WTC11 (cell line): ENCODE measurements at regions of chr3 and their contacts with region 1.

Region 1: DNA sequence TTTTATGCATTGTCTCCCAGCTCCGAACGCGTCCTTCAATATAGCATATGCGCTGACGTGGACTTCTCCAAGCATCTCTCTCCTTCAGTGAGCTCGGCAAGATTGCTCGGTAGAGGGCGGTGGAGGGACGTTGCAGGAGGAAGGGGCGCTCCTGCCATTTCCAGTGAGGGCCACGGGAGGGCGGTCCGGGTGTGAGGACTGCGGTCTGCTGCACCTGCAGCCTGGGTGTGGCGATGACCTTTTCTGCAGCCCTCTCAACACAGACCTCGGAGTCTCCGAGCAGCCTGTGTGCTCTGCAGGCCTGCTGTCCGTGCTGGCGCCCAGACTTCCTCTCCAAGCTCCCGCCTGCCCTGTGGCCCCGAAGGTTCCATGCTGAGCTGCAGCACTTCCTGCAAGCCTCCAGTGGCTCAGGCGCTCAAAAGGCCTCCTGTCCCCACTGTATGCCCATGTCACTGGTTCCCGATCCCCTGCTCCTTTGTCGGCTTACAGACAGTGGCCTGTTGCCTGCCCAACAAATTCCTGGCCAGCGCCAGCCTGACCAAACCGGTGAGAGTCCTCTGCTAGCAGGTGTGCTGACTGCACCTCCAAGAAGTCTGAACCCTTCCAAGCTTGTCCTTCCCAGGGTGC is 8.9 kb upstream of the RTP3 start:
- DNase-seq: peak; percentile 99
- ATAC-seq: peak; percentile 98
- H3K4me3 Mint-ChIP-seq: no peak overlapping the region
- H3K27ac Mint-ChIP-seq: peak overlapping the region; percentile 55; the same call in 1 of the 2 replicates
- H3K4me1 Mint-ChIP-seq: peaks cover 28% of the 10 kb centered on the region
- H3K27me3 Mint-ChIP-seq: peaks cover 12% of the 10 kb centered on the region
- CTCF ChIP-seq: peak; percentile 92

Region 2: GRCh38 chr3:46359733-46360493 is 128.9 kb before region 1 on chr3:
- CTCF ChIA-PET with region 1: no interaction called
- POLR2A ChIA-PET with region 1: no interaction called
- DNase-seq: no peak
- ATAC-seq: no peak
- H3K4me3 Mint-ChIP-seq: no peak overlapping the region
- H3K27ac Mint-ChIP-seq: no peak overlapping the region
- H3K4me1 Mint-ChIP-seq: no peaks in the 10 kb centered on the region
- H3K27me3 Mint-ChIP-seq: peaks cover 5% of the 10 kb centered on the region
- CTCF ChIP-seq: no peak

Region 3: DNA sequence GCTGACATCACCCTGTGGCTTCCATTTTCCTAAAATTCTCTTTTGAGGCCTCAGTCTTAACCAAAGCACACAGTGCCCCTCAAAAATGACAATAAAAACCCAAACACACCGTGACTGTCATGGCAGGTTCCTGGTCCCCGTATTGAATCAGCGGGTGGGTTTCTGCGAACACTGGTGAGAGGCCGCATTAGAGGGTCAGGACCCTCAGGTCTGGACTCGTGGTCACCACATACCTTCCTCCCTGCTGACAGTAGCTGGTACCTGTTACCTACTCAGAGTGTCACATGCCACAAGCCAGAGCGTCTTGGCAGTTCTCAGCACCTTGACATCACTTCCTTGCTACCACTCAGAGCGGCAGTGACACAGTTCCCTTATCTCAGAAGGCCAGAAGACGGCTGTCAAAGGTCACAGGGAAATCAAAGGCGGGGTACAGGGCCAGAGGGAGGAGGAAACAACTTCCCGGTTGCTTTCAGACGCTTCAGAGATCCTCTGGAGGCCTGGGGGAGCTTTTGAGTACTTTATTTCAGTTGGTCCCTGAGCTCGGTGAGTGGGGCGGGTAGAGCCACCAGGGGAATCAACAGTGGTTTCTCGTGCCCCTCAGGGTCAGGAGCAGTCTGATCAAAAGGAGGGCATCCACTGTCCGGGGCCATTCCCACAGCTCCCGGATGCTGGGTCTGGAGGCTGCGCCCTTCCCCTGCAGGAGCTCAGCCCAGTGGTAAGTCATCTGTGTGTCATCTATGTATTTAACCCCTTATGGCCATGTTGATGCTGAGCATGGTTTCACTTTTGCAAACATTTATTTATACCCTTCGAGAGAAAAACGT is 81.8 kb before region 1 on chr3 and contains the starts of genes CCR5AS and CCRL2:
- CTCF ChIA-PET with region 1: no interaction called
- POLR2A ChIA-PET with region 1: no interaction called
- DNase-seq: no peak
- ATAC-seq: no peak
- H3K4me3 Mint-ChIP-seq: no peak within 1 kb of the TSS
- H3K27ac Mint-ChIP-seq: no peak within 1 kb of the TSS
- H3K4me1 Mint-ChIP-seq: peaks cover 2% of the 10 kb centered on the region; the same call in 1 of the 2 replicates
- H3K27me3 Mint-ChIP-seq: no peaks in the 10 kb centered on the region
- CTCF ChIP-seq: no peak
- total RNA-seq, gene CCRL2: not detected in 3 replicates

Region 4: GRCh38 chr3:46462111-46462510 is 26.7 kb before region 1 on chr3:
- CTCF ChIA-PET with region 1: interaction called, 22 read pairs
- POLR2A ChIA-PET with region 1: no interaction called
- DNase-seq: no peak
- ATAC-seq: peak; percentile 63
- H3K4me3 Mint-ChIP-seq: no peak overlapping the region
- H3K27ac Mint-ChIP-seq: no peak overlapping the region
- H3K4me1 Mint-ChIP-seq: peaks cover 3% of the 10 kb centered on the region
- H3K27me3 Mint-ChIP-seq: peaks cover 42% of the 10 kb centered on the region
- CTCF ChIP-seq: no peak

Region 5: DNA sequence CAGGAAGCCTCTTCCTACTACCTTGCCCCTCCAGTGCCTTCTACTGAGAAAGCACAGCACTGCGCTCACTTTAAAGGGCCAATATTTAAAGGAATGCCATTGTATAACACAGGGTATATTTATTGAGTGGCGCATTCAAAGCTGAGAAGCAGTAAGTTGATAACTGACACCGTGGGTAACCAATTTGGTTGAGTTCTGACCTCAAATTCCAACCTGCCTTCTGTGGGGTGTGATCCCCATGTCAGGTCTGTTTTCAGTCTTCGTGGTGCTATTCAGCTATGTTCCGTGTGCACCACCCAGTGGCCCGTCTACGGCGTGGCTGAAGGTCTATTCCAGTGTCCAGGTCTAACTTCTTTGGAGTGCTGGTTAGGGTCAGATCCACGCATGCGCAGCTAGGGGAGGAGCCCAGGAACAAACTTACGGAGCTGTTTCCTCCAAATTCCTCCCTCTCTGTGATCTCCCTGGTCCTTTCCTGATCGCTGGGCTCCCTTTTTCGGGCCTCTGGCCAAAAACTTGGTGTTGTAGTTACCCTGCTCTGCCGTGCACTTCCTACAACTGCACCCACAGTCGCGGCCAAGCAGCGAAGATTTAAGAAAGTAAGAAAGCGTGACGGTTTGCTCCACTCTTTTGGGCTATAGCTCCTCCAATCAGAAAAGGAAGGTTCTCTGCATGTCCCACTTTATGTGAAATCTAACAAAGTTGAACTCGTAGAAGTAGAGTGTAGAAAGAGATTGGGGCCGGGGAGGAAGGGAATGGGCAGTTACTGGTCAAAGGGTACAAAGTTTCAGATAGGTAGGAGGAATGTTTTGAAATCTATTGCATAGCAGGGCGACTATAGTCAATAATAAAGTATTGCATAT is 69.6 kb after region 1 on chr3:
- CTCF ChIA-PET with region 1: interaction called, 99 read pairs
- POLR2A ChIA-PET with region 1: interaction called, 6 read pairs
- DNase-seq: peak; percentile 76
- ATAC-seq: peak; percentile 88
- H3K4me3 Mint-ChIP-seq: peak overlapping the region; percentile 57
- H3K27ac Mint-ChIP-seq: peak overlapping the region; percentile 92
- H3K4me1 Mint-ChIP-seq: peaks cover 60% of the 10 kb centered on the region
- H3K27me3 Mint-ChIP-seq: no peaks in the 10 kb centered on the region; the same call in 1 of the 2 replicates
- CTCF ChIP-seq: no peak

Region 6: DNA sequence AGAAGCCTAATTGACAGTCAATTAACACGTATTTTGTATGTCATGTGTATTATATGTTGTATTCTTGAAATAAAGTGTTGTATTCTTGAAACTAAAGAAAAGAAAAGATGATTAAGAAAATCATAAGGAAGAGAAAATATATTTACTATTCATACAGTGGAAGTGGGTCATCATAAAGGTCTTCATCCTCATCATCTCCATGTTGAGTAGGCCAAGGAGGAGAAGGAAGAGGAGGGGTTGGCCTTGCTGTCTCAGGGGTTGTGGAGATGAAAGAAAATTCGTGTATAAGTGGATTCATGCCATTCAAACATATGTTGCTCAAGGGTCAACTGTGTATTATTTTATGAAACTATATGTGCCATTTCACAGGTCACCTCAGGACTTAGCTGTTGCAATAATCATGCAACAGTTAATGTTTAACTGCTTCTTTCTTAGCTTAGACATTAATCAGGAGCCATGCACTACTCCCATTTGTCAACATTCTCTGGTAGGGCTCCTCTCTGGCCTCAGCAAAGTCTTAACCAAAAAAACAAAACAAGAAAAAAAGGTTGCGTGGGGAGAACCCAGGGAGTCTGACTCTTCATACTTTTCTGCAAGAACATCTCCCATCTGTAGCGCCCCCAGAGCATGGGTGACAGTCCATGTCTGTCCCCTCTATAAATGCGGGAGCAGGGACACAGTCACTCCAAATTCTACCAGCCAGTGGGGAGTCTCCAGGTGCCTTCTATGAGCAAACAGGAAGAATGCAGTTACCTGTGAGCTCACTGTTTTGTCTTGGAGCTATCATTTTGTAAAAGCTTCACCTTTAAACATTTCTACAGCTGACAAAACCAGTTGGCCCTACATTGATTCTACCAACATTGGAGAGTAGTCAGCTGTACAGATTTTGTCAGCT is 97.2 kb after region 1 on chr3:
- CTCF ChIA-PET with region 1: interaction called, 54 read pairs
- POLR2A ChIA-PET with region 1: interaction called, 8 read pairs
- DNase-seq: no peak
- ATAC-seq: peak; percentile 54
- H3K4me3 Mint-ChIP-seq: no peak overlapping the region
- H3K27ac Mint-ChIP-seq: peak overlapping the region; percentile 42
- H3K4me1 Mint-ChIP-seq: peaks cover 41% of the 10 kb centered on the region
- H3K27me3 Mint-ChIP-seq: peaks cover 44% of the 10 kb centered on the region
- CTCF ChIP-seq: no peak

Region 7: GRCh38 chr3:46629551-46630517 is 141.0 kb after region 1 on chr3:
- CTCF ChIA-PET with region 1: interaction called, 70 read pairs
- POLR2A ChIA-PET with region 1: interaction called, 4 read pairs
- DNase-seq: peak; percentile 91
- ATAC-seq: peak; percentile 89
- H3K4me3 Mint-ChIP-seq: peak overlapping the region; percentile 27
- H3K27ac Mint-ChIP-seq: peak overlapping the region; percentile 72
- H3K4me1 Mint-ChIP-seq: peaks cover 51% of the 10 kb centered on the region
- H3K27me3 Mint-ChIP-seq: no peaks in the 10 kb centered on the region; the same call in 1 of the 2 replicates
- CTCF ChIP-seq: peak; percentile 44; the same call in 1 of the 2 replicates

Region 8: GRCh38 chr3:46705022-46705530 is 216.2 kb after region 1 on chr3:
- CTCF ChIA-PET with region 1: interaction called, 14 read pairs
- POLR2A ChIA-PET with region 1: no interaction called
- DNase-seq: peak; percentile 83
- ATAC-seq: peak; percentile 78
- H3K4me3 Mint-ChIP-seq: no peak overlapping the region
- H3K27ac Mint-ChIP-seq: no peak overlapping the region
- H3K4me1 Mint-ChIP-seq: peaks cover 11% of the 10 kb centered on the region
- H3K27me3 Mint-ChIP-seq: peaks cover 29% of the 10 kb centered on the region
- CTCF ChIP-seq: peak; percentile 97